ENCODE measurements at regions of chr16 and their contacts with region 1.

Region 1: GRCh38 chr16:72203401-72203800 is 31.4 kb upstream of the PMFBP1 start:
- H3K4me3 Mint-ChIP-seq: peak overlapping the region; percentile 52
- H3K27ac Mint-ChIP-seq: peak overlapping the region; percentile 99
- H3K4me1 Mint-ChIP-seq: peaks cover 69% of the 10 kb centered on the region
- H3K27me3 Mint-ChIP-seq: no peaks in the 10 kb centered on the region

Region 2: DNA sequence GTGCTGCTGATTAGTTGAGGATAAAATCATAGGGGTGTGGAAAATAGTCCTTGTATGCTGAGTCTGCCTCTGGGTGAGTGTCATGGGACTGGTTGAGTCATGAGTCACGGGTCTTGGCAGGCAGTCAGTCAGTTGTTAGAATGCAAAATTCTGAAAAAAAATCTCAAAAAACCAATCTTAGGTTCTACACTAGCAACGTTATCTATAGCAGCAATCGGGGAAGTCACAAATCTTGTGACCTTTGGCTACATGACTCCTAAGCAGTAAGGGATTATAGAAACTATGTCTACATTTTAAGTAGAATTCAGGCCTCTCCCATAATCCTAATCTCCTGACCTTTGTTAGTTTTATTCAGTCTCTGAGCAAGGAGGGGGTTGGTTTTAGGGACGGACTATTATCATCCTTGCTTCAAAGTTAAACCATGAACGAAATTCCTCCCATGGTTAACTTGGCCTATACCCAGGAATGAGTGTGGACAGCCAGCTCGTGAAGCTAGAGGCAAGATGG is 13.5 kb before region 1 on chr16:
- intact Hi-C with region 1: loop called (anchors 2 kb)
- H3K4me3 Mint-ChIP-seq: no peak overlapping the region
- H3K27ac Mint-ChIP-seq: peak overlapping the region; percentile 77
- H3K4me1 Mint-ChIP-seq: peaks cover 32% of the 10 kb centered on the region
- H3K27me3 Mint-ChIP-seq: no peaks in the 10 kb centered on the region